ENCODE measurements at regions of chr6 and their contacts with region 1.

Region 1: DNA sequence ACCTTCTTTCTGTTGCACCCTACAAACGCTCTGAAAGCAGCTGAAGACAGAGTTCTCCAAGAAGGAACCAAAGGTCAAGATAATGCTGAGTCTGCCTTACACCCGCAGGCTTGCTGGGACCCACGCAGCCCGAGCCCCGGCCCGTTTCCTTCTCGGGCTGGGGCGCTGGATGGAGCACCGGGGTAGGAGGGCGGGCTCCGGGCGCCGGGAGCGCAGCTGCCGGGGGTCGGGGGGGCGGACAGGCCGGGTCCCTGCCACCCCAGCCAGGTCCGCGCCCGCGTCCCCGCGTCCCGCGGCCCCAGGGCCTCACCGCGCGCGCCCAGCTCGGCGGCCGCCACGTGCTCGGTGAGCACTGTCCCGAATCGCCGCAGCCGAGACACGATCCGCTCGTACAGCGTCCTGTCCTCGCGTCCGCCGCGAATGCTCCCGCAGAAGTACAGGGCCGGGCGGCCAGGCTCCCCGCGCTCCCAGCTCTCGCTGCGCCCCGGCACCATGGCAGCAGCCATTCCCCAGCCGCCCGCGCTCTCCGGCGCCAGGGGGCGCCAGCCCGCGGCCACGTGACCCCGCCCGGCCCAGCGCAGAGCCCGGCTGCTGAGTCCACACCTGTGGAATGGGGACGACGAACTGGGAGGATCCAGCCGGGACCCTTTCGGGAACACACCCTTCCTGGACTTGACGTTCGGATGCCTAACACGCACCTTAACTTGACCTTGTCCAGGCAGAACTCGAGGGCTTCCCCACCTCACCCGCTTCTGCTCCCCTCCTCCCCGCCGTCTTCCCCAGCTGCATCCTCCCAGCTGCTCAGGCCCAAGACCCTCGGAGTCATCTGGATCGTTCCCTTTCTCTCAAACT is at the start of gene DNPH1:
- DNase-seq: peak; percentile 95
- H3K4me3 ChIP-seq: peak within 1 kb of the TSS; percentile 60 to 79
- H3K27ac ChIP-seq: peak within 1 kb of the TSS in 1 of 2 experiments; percentile 53; a peak in 1 of 4 replicates
- H3K4me1 ChIP-seq: peaks cover 0 to 4% of the 10 kb centered on the region in 2 experiments; a peak in 1 of 4 replicates
- H3K27me3 ChIP-seq: peaks cover 6% of the 10 kb centered on the region; the same call in 1 of the 2 replicates
- CTCF ChIP-seq: peak; percentile 82
- EP300 ChIP-seq: no peak; a peak in 1 of 4 replicates
- RAD21 ChIP-seq: peak; percentile 55
- polyA plus RNA-seq, gene DNPH1: 263 and 287 TPM in 2 replicates

Region 2: GRCh38 chr6:43150051-43150751 is 79.0 kb before region 1 on chr6:
- CTCF ChIA-PET with region 1: no interaction called
- POLR2A ChIA-PET with region 1: no interaction called
- DNase-seq: no peak
- H3K4me3 ChIP-seq: no peak overlapping the region
- H3K27ac ChIP-seq: peak overlapping the region in 1 of 2 experiments; percentile 34; a peak in 1 of 4 replicates
- H3K4me1 ChIP-seq: no peaks in the 10 kb centered on the region
- H3K27me3 ChIP-seq: no peaks in the 10 kb centered on the region
- CTCF ChIP-seq: no peak
- EP300 ChIP-seq: no peak
- RAD21 ChIP-seq: no peak

Region 3: GRCh38 chr6:43211955-43212354 is 17.2 kb before region 1 on chr6:
- CTCF ChIA-PET with region 1: interaction called, 14 read pairs
- POLR2A ChIA-PET with region 1: no interaction called
- DNase-seq: no peak
- H3K4me3 ChIP-seq: no peak overlapping the region
- H3K27ac ChIP-seq: no peak overlapping the region
- H3K4me1 ChIP-seq: no peaks in the 10 kb centered on the region
- H3K27me3 ChIP-seq: no peaks in the 10 kb centered on the region
- CTCF ChIP-seq: 0 out of 2 replicates have a peak, but pooled peaks have one; percentile 7
- EP300 ChIP-seq: no peak
- RAD21 ChIP-seq: no peak

Region 4: GRCh38 chr6:43250992-43251373 is 21.8 kb after region 1 on chr6:
- CTCF ChIA-PET with region 1: interaction called, 15 read pairs
- POLR2A ChIA-PET with region 1: no interaction called
- DNase-seq: no peak
- H3K4me3 ChIP-seq: no peak overlapping the region
- H3K27ac ChIP-seq: no peak overlapping the region
- H3K4me1 ChIP-seq: peaks cover 0 to 18% of the 10 kb centered on the region in 2 experiments; a peak in 1 of 4 replicates
- H3K27me3 ChIP-seq: no peaks in the 10 kb centered on the region
- CTCF ChIP-seq: no peak
- EP300 ChIP-seq: no peak
- RAD21 ChIP-seq: no peak

Region 5: DNA sequence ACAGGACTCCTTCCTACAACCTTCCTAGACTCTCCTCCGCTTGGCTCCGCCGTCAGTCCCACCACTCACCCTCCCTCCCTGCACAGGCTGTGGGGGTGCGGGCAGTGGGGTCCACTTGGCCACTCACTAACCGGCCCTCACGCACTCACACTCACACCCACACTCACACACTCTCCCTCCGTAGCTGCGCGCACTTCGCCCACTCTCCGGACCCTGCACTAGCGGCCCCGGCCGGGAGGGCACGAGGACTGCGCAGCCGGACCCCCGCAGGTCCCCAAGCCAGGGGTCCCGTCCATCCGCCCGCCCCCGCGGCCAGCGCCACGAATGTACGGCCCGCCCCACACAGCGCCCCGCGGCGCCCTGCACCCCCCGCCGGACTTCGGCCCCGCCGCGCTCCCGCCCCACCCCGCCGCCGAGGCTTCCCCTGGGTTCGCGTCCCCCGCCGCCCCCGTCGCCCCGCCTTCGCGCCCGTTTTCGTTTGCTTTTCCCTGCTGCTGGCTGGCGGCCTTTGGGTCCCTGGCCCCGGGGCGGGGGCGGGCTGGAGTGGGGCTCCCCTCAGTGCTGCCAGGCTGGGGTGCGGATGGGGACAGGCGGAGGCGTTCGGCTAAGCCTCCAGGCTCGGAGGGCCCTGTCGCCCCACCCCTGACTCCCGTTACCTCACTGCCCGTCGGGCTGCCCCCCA is 45.9 kb after region 1 on chr6:
- CTCF ChIA-PET with region 1: interaction called, 10 read pairs
- POLR2A ChIA-PET with region 1: no interaction called
- DNase-seq: peak; percentile 88
- H3K4me3 ChIP-seq: peak overlapping the region in 1 of 2 experiments; percentile 38; a peak in 2 of 4 replicates
- H3K27ac ChIP-seq: no peak overlapping the region
- H3K4me1 ChIP-seq: peaks cover 0 to 12% of the 10 kb centered on the region in 2 experiments; a peak in 1 of 4 replicates
- H3K27me3 ChIP-seq: no peaks in the 10 kb centered on the region
- CTCF ChIP-seq: no peak
- EP300 ChIP-seq: no peak
- RAD21 ChIP-seq: no peak

Region 6: DNA sequence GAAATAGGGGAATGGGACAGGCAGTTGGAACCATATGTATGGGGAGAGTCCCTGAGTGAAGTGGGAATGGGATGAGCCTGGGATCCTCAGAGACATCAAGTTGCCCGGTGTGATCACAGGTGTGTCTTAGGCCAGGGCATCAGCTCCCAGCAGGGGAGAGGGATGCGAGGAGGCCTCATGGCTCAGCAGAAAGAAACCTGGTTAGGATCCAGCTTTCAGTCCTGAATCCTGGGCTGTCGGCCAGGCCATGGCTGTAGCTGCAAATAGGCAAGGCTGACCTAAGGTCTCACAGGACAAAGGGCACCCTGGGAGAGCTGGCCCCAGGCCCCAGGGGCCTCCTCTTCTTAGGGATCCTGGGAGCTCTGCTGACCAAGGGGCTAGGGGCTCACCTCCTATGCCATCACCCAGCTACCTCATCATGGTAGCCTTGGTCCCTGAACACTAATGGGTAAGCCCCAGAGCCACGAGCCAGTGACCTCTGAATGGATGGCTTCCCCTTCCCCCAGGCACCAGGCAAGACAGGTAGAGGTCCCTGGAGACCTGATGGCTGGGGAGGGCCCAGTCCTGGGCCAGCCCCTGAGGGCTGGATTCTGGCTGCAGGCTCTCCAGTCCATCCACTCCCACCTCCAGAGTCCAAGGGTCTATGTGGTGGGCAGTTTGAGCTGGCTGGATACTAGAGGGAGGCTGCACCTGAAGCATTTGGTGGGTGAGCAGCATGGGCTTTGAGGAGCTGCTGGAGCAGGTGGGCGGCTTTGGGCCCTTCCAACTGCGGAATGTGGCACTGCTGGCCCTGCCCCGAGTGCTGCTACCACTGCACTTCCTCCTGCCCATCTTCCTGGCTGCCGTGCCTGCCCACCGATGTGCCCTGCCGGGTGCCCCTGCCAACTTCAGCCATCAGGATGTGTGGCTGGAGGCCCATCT is 68.7 kb after region 1 on chr6 and contains the start of gene SLC22A7:
- CTCF ChIA-PET with region 1: interaction called, 16 read pairs
- POLR2A ChIA-PET with region 1: no interaction called
- DNase-seq: no peak
- H3K4me3 ChIP-seq: no peak within 1 kb of the TSS
- H3K27ac ChIP-seq: no peak within 1 kb of the TSS
- H3K4me1 ChIP-seq: peaks cover 0 to 10% of the 10 kb centered on the region in 2 experiments; a peak in 1 of 4 replicates
- H3K27me3 ChIP-seq: peaks cover 6% of the 10 kb centered on the region; the same call in 1 of the 2 replicates
- CTCF ChIP-seq: no peak
- EP300 ChIP-seq: no peak
- RAD21 ChIP-seq: no peak
- polyA plus RNA-seq, gene SLC22A7: not detected in 2 replicates

Region 7: GRCh38 chr6:43369174-43370022 is 140.2 kb after region 1 on chr6 and contains the start of gene ZNF318:
- CTCF ChIA-PET with region 1: interaction called, 13 read pairs
- POLR2A ChIA-PET with region 1: no interaction called
- DNase-seq: peak; percentile 96
- H3K4me3 ChIP-seq: peak within 1 kb of the TSS; percentile 80 to 89
- H3K27ac ChIP-seq: peak within 1 kb of the TSS; percentile 65 to 89
- H3K4me1 ChIP-seq: peaks cover 8 to 9% of the 10 kb centered on the region in 2 experiments; a peak in 3 of 4 replicates
- H3K27me3 ChIP-seq: no peaks in the 10 kb centered on the region
- CTCF ChIP-seq: no peak
- EP300 ChIP-seq: no peak
- RAD21 ChIP-seq: no peak
- polyA plus RNA-seq, gene ZNF318: 6.3 and 7.8 TPM in 2 replicates

Region 8: GRCh38 chr6:43521836-43522235 is 292.7 kb after region 1 on chr6:
- CTCF ChIA-PET with region 1: no interaction called
- POLR2A ChIA-PET with region 1: no interaction called
- DNase-seq: no peak
- H3K4me3 ChIP-seq: no peak overlapping the region
- H3K27ac ChIP-seq: no peak overlapping the region
- H3K4me1 ChIP-seq: peaks cover 0 to 9% of the 10 kb centered on the region in 2 experiments; a peak in 1 of 4 replicates
- H3K27me3 ChIP-seq: no peaks in the 10 kb centered on the region
- CTCF ChIP-seq: no peak
- EP300 ChIP-seq: no peak
- RAD21 ChIP-seq: no peak

Measured in SK-N-SH (cell line).